A549 (cell line): ENCODE measurements at regions of chr16 and their contacts with region 1.

Region 1: DNA sequence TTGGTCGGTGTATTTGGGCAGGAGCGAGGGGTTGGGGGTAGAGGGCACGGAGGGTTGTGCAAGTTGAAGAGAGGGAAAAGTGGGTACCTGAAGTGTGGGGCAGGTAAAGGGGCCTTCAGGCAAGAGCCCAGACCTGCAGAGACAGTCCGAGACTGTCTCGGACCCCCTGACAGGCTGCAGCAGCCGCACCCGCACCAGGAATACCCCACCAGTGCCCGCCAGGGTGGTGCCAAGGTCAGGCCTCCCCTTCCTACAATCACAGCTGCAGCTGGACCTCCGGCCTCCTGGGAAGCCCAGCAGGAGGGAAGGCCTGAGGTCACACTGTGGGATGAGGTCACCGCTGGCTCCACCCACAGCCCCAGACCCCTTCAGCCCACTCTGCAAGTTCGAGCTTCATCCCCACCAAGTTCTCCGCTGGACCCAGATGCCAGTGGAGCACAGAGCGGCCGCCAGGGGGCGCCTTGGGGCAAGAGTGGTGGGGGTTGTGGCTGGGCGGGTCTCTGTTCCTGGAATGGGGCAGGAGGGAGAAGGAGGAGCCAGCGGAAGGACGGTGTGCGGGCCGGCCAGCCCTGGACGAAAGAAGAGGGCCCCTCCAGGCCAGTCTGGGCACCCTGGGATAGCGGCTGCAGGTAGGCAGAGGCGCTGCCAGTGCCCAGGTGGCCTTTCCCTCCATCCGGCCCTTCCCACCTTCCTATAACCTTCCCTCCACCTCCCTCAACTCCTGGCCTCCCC is at the start of gene HSD3B7:
- DNase-seq: peak; percentile 80 to 95
- ATAC-seq: peak; percentile 75 to 92
- H3K4me3 ChIP-seq: peak within 1 kb of the TSS; percentile 46
- H3K27ac ChIP-seq: peak within 1 kb of the TSS; percentile 84 to 88
- H3K4me1 ChIP-seq: peaks cover 13% of the 10 kb centered on the region
- CTCF ChIP-seq: peak; percentile 86
- EP300 ChIP-seq: no peak
- POLR2A ChIP-seq: peak; percentile 21; the same call in 1 of the 2 replicates
- RAD21 ChIP-seq: peak; percentile 86 to 90
- polyA plus RNA-seq, gene HSD3B7: 10.5 and 15.2 TPM in 2 replicates

Region 2: DNA sequence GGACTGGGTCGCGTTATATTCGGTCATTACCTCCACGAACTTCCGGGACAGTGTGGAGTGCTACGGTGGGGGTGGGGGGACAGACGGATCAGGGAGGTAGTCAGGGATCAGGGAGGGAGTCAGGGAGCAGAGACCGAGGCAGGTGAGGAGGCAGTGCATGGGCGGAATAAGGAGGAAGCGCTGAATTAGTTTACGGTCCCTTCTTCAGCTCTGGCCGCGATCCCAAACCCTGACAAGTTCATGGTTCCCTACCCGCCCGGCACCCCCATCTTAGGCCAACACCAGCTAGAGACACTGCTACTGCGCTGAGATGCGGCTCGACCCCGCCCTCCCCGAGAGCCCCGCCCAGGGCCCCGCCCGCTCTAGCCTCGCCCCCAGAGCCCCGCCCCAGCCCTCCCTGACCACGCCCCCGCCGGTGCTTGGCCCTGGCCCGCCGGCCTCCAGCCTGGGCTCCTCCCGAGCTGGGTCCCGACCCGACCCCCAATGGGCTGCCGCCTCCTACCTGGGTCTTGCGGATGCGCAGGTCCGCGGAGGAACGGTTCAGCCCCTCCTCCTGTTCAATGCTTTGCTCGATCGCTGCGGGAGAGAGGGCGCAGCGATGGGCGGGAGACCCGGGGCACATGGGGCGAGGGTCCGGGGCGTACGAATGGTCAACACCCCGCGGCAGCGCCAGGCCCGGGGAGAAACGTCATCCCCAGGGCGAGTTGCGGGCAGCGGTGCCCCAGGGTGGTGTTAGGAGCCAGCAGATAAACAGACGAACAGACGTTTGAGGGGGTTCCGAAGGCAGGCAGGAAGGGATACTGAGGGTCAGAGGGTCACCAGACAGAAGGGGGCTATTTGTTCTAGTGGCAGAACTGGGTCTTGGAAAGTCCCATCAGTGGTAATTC is 12.4 kb after region 1 on chr16:
- CTCF ChIA-PET with region 1: interaction called, 25 read pairs
- POLR2A ChIA-PET with region 1: interaction called, 9 read pairs
- DNase-seq: peak; percentile 93 to 95
- ATAC-seq: peak; percentile 77 to 87
- H3K4me3 ChIP-seq: peak overlapping the region; percentile 61
- H3K27ac ChIP-seq: peak overlapping the region; percentile 97 to 100
- H3K4me1 ChIP-seq: peaks cover 44% of the 10 kb centered on the region
- CTCF ChIP-seq: no peak
- EP300 ChIP-seq: no peak
- POLR2A ChIP-seq: peak; percentile 58
- RAD21 ChIP-seq: peak in 1 of 2 experiments; percentile 16; a peak in 1 of 5 replicates

Region 3: GRCh38 chr16:31016018-31016417 is 31.2 kb after region 1 on chr16:
- CTCF ChIA-PET with region 1: interaction called, 28 read pairs
- POLR2A ChIA-PET with region 1: no interaction called
- DNase-seq: peak in 1 of 2 experiments; percentile 50
- ATAC-seq: peak; percentile 30 to 76; a peak in 4 of 6 replicates
- H3K4me3 ChIP-seq: no peak overlapping the region
- H3K27ac ChIP-seq: 0 out of 6 replicates have a peak overlapping the region, but pooled peaks of 1 of the 2 experiments have one; percentile 9
- H3K4me1 ChIP-seq: peaks cover 8% of the 10 kb centered on the region; the same call in 2 of the 3 replicates
- CTCF ChIP-seq: peak; percentile 17; the same call in 2 of the 3 replicates
- EP300 ChIP-seq: no peak
- POLR2A ChIP-seq: no peak
- RAD21 ChIP-seq: peak in 1 of 2 experiments; percentile 39; a peak in 2 of 5 replicates

Region 4: DNA sequence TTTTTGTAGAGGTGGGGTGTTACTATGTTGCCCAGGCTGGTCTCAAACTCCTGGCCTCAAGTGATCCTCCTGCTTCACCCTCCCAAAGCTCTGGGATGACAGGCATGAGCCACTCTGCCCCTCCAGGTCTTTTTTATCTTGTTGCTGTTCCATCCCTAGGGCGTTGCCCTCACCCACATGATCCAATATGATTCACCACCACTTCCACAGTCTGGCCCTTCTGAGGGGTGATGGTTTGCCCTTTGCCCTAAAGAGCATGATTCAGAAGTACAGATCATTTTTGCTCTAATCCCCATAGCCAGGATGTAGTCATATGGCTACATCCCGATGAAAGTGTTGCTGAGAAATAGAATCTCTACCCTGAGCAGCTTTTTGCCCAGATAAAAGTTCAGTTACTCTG is 67.3 kb after region 1 on chr16:
- CTCF ChIA-PET with region 1: interaction called, 13 read pairs
- POLR2A ChIA-PET with region 1: interaction called, 3 read pairs
- DNase-seq: peak; percentile 90
- ATAC-seq: peak; percentile 96 to 98
- H3K4me3 ChIP-seq: no peak overlapping the region
- H3K27ac ChIP-seq: peak overlapping the region; percentile 82 to 88
- H3K4me1 ChIP-seq: peaks cover 18% of the 10 kb centered on the region
- CTCF ChIP-seq: no peak
- EP300 ChIP-seq: no peak
- POLR2A ChIP-seq: no peak
- RAD21 ChIP-seq: no peak; a peak in 2 of 5 replicates

Region 5: DNA sequence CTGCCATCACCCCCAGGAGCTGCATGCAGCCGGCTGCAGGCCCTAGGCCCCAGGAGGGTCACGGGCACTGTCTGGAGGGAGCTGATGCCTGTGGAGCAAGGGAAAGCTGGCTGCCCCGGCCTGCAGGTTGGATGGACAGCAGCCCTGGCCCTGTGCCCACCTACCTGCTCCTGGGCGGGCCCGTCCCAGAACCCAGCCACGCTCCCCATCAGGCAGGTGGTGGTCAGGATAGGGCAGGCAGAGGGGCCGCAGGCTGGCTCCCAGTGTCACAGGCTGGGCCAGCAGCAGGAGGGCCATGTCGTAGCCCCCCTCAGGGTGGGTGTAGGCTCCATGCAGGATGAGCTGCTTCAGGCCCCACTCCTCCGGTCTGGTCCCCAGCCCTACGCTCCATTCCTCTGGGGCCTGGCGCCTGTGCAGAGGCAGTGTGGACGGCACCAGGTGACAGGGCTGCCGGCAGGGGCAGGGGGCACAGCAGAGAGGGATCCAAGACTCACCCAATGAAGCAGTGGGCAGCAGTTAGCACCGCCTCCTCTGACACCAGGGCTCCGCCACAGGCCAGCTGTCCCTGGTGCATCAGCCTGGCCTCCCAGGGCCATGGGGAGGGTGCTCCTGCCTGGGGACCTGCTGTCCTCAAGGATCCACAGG is 99.9 kb after region 1 on chr16:
- CTCF ChIA-PET with region 1: interaction called, 17 read pairs
- POLR2A ChIA-PET with region 1: no interaction called
- DNase-seq: no peak
- ATAC-seq: peak; percentile 12 to 18; a peak in 3 of 6 replicates
- H3K4me3 ChIP-seq: no peak overlapping the region
- H3K27ac ChIP-seq: no peak overlapping the region
- H3K4me1 ChIP-seq: no peaks in the 10 kb centered on the region
- CTCF ChIP-seq: no peak
- EP300 ChIP-seq: no peak
- POLR2A ChIP-seq: no peak
- RAD21 ChIP-seq: no peak

Region 6: GRCh38 chr16:31142109-31143010 is 157.5 kb after region 1 on chr16:
- CTCF ChIA-PET with region 1: interaction called, 78 read pairs
- POLR2A ChIA-PET with region 1: interaction called, 11 read pairs
- DNase-seq: peak; percentile 97 to 99
- ATAC-seq: peak; percentile 82 to 89
- H3K4me3 ChIP-seq: peak overlapping the region; percentile 50
- H3K27ac ChIP-seq: peak overlapping the region; percentile 90 to 95
- H3K4me1 ChIP-seq: peaks cover 30% of the 10 kb centered on the region
- CTCF ChIP-seq: peak; percentile 96
- EP300 ChIP-seq: no peak
- POLR2A ChIP-seq: peak; percentile 52
- RAD21 ChIP-seq: peak; percentile 69 to 88